CD8-positive, alpha-beta memory T cell (primary cell): ENCODE measurements at regions of chr11 and their contacts with region 1.

Region 1: GRCh38 chr11:16820324-16821092 is 82.1 kb downstream of the C11orf58 start:
- DNase-seq: peak in 4 of 5 donors; percentile 14 to 66 (median 43)
- H3K4me3 ChIP-seq: no peak overlapping the region
- H3K4me3 Mint-ChIP-seq: no peak overlapping the region
- H3K27ac ChIP-seq: no peak overlapping the region
- H3K27ac Mint-ChIP-seq: peak overlapping the region in 3 of 8 donors; percentile 19 to 67 (median 42)
- H3K4me1 ChIP-seq: no peaks in the 10 kb centered on the region
- H3K4me1 Mint-ChIP-seq: peaks cover 4 to 7% (median 6%) of the 10 kb centered on the region in 3 donors
- H3K27me3 ChIP-seq: no peaks in the 10 kb centered on the region
- H3K27me3 Mint-ChIP-seq: peaks cover 0 to 3% of the 10 kb centered on the region in 2 donors

Region 2: GRCh38 chr11:16801288-16801980 is 19.1 kb before region 1 on chr11:
- CTCF ChIA-PET with region 1: interaction called, 12 read pairs
- POLR2A ChIA-PET with region 1: no interaction called
- DNase-seq: no peak
- H3K4me3 ChIP-seq: no peak overlapping the region
- H3K4me3 Mint-ChIP-seq: peak overlapping the region in 1 of 7 donors; percentile 20
- H3K27ac ChIP-seq: no peak overlapping the region
- H3K27ac Mint-ChIP-seq: peak overlapping the region in 5 of 8 donors; percentile 23 to 82 (median 69)
- H3K4me1 ChIP-seq: no peaks in the 10 kb centered on the region
- H3K4me1 Mint-ChIP-seq: peaks cover 0 to 27% (median 22%) of the 10 kb centered on the region in 3 donors
- H3K27me3 ChIP-seq: no peaks in the 10 kb centered on the region
- H3K27me3 Mint-ChIP-seq: peaks cover 1 to 12% of the 10 kb centered on the region in 2 donors

Region 3: DNA sequence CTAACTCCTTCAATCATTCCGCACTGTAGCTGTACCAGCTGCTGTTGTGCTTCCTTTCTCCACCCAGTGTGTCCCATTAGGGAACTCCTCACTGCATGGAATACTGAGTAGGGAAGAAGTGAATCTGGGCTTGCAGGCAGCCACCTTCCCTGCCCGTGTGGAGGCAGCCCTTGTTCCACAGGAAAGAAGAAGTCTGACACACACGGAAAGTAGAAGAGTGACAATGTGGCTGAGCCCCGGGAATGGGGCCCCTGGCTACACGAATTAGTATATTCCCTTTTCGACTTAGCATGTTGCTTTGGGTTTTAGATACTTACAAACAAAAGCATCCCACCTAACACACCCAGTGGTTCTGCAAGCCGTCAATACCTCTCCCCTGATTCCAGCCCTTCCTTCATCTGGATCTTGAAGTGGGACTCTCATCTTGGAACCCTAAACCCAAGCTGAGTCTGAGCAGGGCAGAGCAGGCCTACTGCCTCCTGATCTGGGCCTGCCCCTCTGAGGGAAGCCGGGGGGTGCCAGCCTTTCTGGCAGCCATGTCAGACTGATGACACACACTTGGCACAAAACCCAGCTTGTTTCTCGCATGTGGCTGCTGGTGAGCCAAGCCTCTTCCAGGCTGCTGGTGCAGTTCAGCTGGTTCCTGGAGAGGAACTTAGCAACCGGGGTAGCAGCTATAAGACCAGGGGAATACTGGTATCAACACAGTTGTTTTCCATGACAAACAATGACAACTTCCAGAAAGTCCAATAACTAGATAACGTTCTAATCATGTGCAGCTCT is 10.4 kb before region 1 on chr11:
- CTCF ChIA-PET with region 1: interaction called, 16 read pairs
- POLR2A ChIA-PET with region 1: no interaction called
- DNase-seq: no peak
- H3K4me3 ChIP-seq: no peak overlapping the region
- H3K4me3 Mint-ChIP-seq: peak overlapping the region in 1 of 7 donors; percentile 81
- H3K27ac ChIP-seq: no peak overlapping the region
- H3K27ac Mint-ChIP-seq: peak overlapping the region in 7 of 8 donors; percentile 22 to 92 (median 64)
- H3K4me1 ChIP-seq: no peaks in the 10 kb centered on the region
- H3K4me1 Mint-ChIP-seq: peaks cover 3 to 30% (median 23%) of the 10 kb centered on the region in 3 donors
- H3K27me3 ChIP-seq: no peaks in the 10 kb centered on the region
- H3K27me3 Mint-ChIP-seq: peaks cover 2 to 7% of the 10 kb centered on the region in 2 donors

Region 4: DNA sequence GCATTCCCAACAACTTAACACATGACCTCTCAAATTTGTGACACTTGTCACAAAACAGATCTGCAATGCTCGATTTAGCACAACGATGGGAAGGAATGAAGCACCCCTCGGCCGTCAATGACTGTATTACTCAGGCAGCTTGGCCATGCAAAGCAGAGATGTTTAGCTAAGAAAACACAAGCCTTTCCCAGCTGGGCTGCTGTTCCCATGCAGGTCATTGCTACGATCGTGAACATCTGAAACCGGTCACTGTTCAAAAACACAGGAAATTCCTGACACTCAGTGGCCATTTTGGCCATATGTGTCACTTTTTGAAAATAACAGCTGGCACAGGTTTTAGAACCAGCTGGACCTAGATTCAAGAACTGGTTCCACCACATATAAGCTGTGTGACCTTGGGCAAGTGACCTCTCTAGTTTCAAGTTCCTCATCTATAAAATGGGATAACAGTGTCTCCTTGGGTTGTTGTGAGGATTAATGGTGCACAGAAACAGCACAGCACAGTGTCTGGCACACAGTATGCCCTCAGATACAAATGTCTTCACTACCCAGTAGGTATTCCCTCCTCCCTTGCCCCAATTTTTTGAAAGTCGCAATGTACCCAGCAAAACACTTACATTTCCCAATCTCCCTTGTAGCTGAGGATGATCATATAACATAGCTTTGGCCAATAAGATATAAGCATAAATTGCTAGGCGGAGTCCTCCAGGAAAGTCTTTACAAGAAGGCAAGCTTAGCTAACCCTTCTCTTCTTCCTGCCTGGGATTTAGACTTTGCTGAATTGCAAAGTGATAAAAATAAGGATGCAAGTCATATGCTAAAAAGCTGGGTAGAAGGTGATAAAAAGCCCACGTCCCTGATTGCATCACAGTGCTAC is 11.0 kb after region 1 on chr11:
- CTCF ChIA-PET with region 1: interaction called, 16 read pairs
- POLR2A ChIA-PET with region 1: no interaction called
- DNase-seq: no peak
- H3K4me3 ChIP-seq: no peak overlapping the region
- H3K4me3 Mint-ChIP-seq: no peak overlapping the region
- H3K27ac ChIP-seq: no peak overlapping the region
- H3K27ac Mint-ChIP-seq: no peak overlapping the region
- H3K4me1 ChIP-seq: no peaks in the 10 kb centered on the region
- H3K4me1 Mint-ChIP-seq: no peaks in the 10 kb centered on the region
- H3K27me3 ChIP-seq: no peaks in the 10 kb centered on the region
- H3K27me3 Mint-ChIP-seq: peaks cover 0 to 2% of the 10 kb centered on the region in 2 donors